ENCODE measurements at regions of chr2 and their contacts with region 1.

Region 1: GRCh38 chr2:19901442-19902215 is at the start of gene TTC32:
- DNase-seq: peak; percentile 97
- H3K4me3 ChIP-seq: peak within 1 kb of the TSS; percentile 28 to 97 (median 86)
- H3K27ac ChIP-seq: peak within 1 kb of the TSS; percentile 90
- H3K4me1 ChIP-seq: peaks cover 25% of the 10 kb centered on the region
- H3K27me3 ChIP-seq: no peaks in the 10 kb centered on the region
- CTCF ChIP-seq: peak in 1 of 2 donors; percentile 12
- POLR2A ChIP-seq: peak; percentile 89
- total RNA-seq, gene TTC32: 8.8 and 13.8 TPM in 2 replicates

Region 2: DNA sequence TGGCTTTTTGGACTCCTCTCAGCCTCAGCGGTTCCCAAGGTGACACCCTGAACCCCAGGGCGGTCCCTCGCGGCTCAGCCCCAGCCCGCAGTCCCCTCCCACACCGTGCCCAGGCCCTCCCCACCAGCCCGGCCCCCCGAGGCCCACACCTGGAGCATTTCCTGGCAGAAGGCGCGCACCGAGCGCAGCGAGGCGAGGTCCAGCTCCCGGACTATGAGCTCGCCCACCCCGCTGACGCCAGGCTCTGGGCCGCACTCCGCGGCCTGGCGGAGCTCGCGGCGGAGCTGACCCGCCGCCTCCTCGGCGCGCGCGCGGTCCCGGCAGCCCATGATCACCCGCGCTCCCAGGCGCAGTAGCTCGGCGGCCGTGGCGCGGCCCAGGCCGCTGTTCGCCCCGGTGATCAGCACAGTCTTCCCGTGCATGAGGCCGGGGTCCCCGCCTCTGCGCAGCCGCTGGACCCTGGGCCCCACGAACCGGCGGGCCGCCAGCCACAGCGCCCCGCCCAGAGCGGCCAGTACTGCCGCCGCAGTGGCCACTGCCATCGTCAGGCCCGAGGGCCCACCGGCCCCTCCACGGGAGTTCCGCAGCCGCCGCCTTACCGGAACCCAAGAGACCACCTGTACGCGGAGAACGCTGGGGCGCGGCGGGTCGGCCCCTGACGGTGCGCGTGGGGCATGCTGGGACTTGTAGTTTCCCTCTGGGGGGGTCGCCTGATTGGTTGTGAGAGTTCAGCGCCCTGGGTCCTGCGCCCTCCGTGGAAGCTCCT is 1341.4 kb before region 1 on chr2 and contains the start of gene RDH14:
- CTCF ChIA-PET with region 1: no interaction called
- POLR2A ChIA-PET with region 1: no interaction called
- dilution Hi-C with region 1: no loop called
- intact Hi-C with region 1: loop called (anchors 1 kb)
- DNase-seq: peak; percentile 89
- H3K4me3 ChIP-seq: peak within 1 kb of the TSS; percentile 41 to 95 (median 46)
- H3K27ac ChIP-seq: peak within 1 kb of the TSS; percentile 58
- H3K4me1 ChIP-seq: peaks cover 19% of the 10 kb centered on the region
- H3K27me3 ChIP-seq: no peaks in the 10 kb centered on the region
- CTCF ChIP-seq: no peak
- POLR2A ChIP-seq: peak; percentile 51
- total RNA-seq, gene RDH14: 12.4 and 14.7 TPM in 2 replicates

Region 3: DNA sequence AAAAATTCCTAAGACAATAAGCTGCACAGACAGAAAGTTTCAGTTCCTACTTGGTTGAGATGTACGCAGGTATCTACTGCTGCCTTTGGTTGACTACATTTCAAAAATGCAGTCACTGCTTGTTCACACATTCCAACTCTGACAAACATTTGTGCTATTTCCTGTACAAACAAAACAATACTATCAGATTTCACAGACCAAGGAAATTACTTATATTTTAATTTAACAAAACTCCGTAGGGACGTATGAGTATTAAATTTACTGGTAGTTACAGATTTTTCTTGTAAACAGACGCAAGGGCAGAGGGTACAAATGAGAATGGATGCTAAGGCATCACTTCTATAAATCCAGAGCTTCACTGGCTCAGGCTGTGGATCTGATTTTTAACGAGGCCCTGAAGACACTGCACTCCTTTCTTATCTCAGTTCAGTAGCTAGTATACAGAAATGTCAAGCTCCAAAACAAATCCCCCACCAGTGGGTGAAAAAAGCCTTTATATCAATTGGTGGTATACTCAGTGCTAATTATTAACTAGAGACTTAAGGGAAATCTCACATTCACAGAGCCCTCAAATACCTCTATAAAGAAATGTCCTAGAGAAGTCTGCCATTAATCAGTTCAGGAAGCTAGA is 31.8 kb after region 1 on chr2:
- CTCF ChIA-PET with region 1: interaction called, 7 read pairs
- POLR2A ChIA-PET with region 1: no interaction called
- dilution Hi-C with region 1: no loop called
- intact Hi-C with region 1: loop called (anchors 1 kb)
- DNase-seq: peak; percentile 92
- H3K4me3 ChIP-seq: peak overlapping the region in 2 of 3 experiments; percentile 7 to 66
- H3K27ac ChIP-seq: peak overlapping the region; percentile 99
- H3K4me1 ChIP-seq: peaks cover 28% of the 10 kb centered on the region
- H3K27me3 ChIP-seq: no peaks in the 10 kb centered on the region
- CTCF ChIP-seq: no peak
- POLR2A ChIP-seq: peak; percentile 74

Region 4: DNA sequence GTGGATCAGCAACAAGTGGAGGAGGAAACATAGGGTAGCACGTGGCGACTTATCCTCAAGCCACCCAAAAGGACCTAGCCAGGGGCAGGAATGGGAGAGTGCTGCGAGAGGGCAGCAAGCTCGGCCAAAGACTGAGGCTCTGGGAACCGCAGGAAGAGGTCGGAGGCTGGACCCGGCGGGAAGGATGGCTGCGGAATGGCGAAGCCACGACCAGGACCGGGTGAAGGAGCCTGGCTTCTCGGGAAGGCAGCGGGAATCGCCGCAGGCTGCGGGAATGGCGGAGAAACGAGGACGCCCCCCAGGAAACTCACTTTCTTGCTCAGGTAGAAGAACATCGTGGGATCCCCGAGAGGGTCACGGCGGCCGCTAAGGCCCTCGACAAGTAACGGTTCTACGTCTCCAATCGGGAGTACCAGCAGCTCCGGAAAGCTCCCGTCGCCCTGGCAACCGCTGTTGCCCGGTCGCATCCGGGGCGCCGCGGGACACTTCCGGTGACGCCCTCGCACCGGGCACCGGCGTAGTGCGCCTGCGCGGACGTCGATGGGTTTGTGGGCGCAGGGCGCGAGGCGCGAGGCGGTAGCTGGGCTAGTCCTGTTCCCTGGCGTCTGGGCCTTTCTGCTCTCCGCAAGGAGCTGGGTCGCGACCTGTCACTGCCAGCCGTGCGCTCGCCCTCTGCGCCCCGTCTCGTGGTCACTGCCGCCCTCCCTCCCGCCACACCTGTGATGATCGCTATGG is 88.2 kb after region 1 on chr2 and contains the start of gene WDR35:
- CTCF ChIA-PET with region 1: no interaction called
- POLR2A ChIA-PET with region 1: interaction called, 3 read pairs
- dilution Hi-C with region 1: no loop called
- intact Hi-C with region 1: loop called (anchors 2 kb)
- DNase-seq: peak; percentile 53
- H3K4me3 ChIP-seq: peak within 1 kb of the TSS; percentile 31 to 78 (median 74)
- H3K27ac ChIP-seq: peak within 1 kb of the TSS; percentile 40
- H3K4me1 ChIP-seq: peaks cover 13% of the 10 kb centered on the region
- H3K27me3 ChIP-seq: no peaks in the 10 kb centered on the region
- CTCF ChIP-seq: no peak
- POLR2A ChIP-seq: peak; percentile 83
- total RNA-seq, gene WDR35: 8.0 TPM in 2 replicates

Region 5: DNA sequence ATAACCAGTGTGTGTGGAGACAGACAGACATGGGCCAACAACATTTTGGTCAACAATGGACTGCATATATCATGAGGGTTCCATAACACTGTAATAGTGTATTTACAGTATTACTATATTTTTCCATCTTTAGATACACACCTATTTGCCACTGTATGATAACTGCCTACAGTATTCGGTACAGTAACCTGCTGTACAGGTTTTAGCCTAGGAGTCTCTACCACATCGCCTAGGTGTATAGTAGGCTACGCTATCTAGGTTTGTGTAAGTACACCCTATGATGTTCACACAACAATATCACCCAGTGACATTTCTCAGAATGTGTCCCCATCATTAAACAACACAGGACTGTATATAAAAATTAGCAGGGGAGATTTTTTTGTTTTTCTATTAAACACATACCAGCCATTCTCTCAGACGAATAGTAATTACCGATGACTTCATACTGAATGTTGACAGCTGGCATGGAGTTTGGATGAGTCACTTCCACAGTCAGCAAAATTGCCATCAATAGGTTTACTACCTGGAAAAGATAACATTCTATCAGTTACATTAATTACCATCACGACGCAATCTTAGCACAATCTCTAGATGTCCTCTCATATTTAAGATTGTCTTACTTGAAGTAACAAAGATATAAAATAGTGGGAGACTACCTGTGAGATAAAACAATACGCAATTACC is 139.0 kb after region 1 on chr2:
- CTCF ChIA-PET with region 1: no interaction called
- POLR2A ChIA-PET with region 1: no interaction called
- dilution Hi-C with region 1: no loop called
- intact Hi-C with region 1: loop called (anchors 1 kb)
- DNase-seq: peak; percentile 85
- H3K4me3 ChIP-seq: no peak overlapping the region
- H3K27ac ChIP-seq: peak overlapping the region; percentile 7
- H3K4me1 ChIP-seq: peaks cover 53% of the 10 kb centered on the region
- H3K27me3 ChIP-seq: no peaks in the 10 kb centered on the region
- CTCF ChIP-seq: no peak
- POLR2A ChIP-seq: no peak

Region 6: GRCh38 chr2:20097879-20098714 is 196.5 kb after region 1 on chr2:
- CTCF ChIA-PET with region 1: no interaction called
- POLR2A ChIA-PET with region 1: no interaction called
- dilution Hi-C with region 1: no loop called
- intact Hi-C with region 1: loop called (anchors 2 kb)
- DNase-seq: peak; percentile 94
- H3K4me3 ChIP-seq: no peak overlapping the region
- H3K27ac ChIP-seq: no peak overlapping the region
- H3K4me1 ChIP-seq: peaks cover 4% of the 10 kb centered on the region
- H3K27me3 ChIP-seq: no peaks in the 10 kb centered on the region
- CTCF ChIP-seq: peak; percentile 86 to 93
- POLR2A ChIP-seq: no peak

Measured in endothelial cell of umbilical vein (primary cell).